ENCODE measurements at regions of chr15 and their contacts with region 1.

Region 1: GRCh38 chr15:58227706-58228543 is 89.7 kb downstream of the AQP9 start:
- DNase-seq: peak; percentile 66 to 89 (median 74)
- ATAC-seq: peak; percentile 89
- H3K4me3 ChIP-seq: no peak overlapping the region
- H3K27ac ChIP-seq: no peak overlapping the region
- H3K4me1 ChIP-seq: peaks cover 0 to 5% of the 10 kb centered on the region in 2 experiments; a peak in 3 of 5 replicates
- H3K27me3 ChIP-seq: no peaks in the 10 kb centered on the region
- CTCF ChIP-seq: peak; percentile 80 to 92 (median 83)
- EP300 ChIP-seq: no peak
- POLR2A ChIP-seq: no peak
- RAD21 ChIP-seq: peak; percentile 96 to 98

Region 2: DNA sequence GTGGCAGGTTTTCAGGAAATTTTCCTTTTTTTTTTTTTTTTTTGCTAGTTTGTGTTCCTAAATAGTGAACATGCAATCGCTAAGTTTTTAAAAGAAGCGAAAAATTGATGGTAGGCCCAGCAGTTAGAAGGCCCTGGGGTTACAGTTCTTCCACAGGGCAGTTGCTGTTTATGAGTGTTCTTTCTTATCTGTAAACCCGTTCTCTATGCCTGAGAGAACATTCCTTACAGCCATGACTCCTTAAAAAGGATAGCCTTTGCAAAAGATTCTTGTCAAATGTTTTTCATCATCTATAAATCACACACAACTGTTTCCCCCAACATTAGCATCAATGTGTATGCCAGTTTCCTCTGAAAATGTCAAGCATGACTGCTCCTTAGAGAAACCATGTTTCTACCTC is 660.0 kb before region 1 on chr15:
- CTCF ChIA-PET with region 1: no interaction called
- POLR2A ChIA-PET with region 1: no interaction called
- in situ Hi-C with region 1: no loop called
- intact Hi-C with region 1: no loop called
- DNase-seq: no peak
- ATAC-seq: no peak
- H3K4me3 ChIP-seq: no peak overlapping the region
- H3K27ac ChIP-seq: no peak overlapping the region
- H3K4me1 ChIP-seq: no peaks in the 10 kb centered on the region; a peak in 2 of 5 replicates
- H3K27me3 ChIP-seq: peaks cover 10 to 22% of the 10 kb centered on the region in 2 experiments
- CTCF ChIP-seq: no peak
- EP300 ChIP-seq: no peak
- POLR2A ChIP-seq: no peak
- RAD21 ChIP-seq: no peak

Region 3: GRCh38 chr15:58433597-58434333 is 205.8 kb after region 1 on chr15:
- CTCF ChIA-PET with region 1: no interaction called
- POLR2A ChIA-PET with region 1: no interaction called
- in situ Hi-C with region 1: no loop called
- intact Hi-C with region 1: loop called (anchors 5 kb)
- DNase-seq: no peak
- ATAC-seq: no peak
- H3K4me3 ChIP-seq: no peak overlapping the region
- H3K27ac ChIP-seq: no peak overlapping the region
- H3K4me1 ChIP-seq: peaks cover 17 to 20% of the 10 kb centered on the region in 2 experiments
- H3K27me3 ChIP-seq: no peaks in the 10 kb centered on the region
- CTCF ChIP-seq: peak in 1 of 3 experiments; percentile 18; a peak in 1 of 6 replicates
- EP300 ChIP-seq: no peak
- POLR2A ChIP-seq: no peak
- RAD21 ChIP-seq: no peak

Region 4: DNA sequence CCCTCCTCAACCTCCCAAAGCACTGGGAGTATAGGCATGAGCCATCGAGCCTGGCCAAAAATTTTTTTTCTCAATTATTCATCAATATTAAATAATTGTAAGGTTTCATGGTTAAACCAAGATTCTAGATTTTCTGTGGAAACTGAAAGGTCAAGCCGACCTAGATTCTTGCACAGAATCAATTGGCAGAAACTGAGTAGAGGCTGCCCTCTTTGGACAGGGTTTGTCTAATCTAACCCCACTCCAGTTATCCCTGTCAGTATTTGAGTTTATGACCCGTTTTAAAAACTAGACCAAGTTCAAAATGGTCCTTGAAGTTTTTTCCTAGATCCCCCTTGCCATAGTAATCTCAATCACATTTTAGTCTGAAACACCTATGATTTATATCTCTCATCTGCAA is 530.2 kb after region 1 on chr15:
- CTCF ChIA-PET with region 1: interaction called, 3 read pairs
- POLR2A ChIA-PET with region 1: no interaction called
- in situ Hi-C with region 1: loop called (anchors 5 kb)
- intact Hi-C with region 1: loop called (anchors 5 kb)
- DNase-seq: peak in 2 of 4 experiments; percentile 28 to 36
- ATAC-seq: peak; percentile 72
- H3K4me3 ChIP-seq: no peak overlapping the region
- H3K27ac ChIP-seq: no peak overlapping the region
- H3K4me1 ChIP-seq: peaks cover 0 to 9% of the 10 kb centered on the region in 2 experiments; a peak in 2 of 5 replicates
- H3K27me3 ChIP-seq: no peaks in the 10 kb centered on the region
- CTCF ChIP-seq: peak; percentile 21 to 57 (median 37); a peak in 3 of 6 replicates
- EP300 ChIP-seq: no peak
- POLR2A ChIP-seq: no peak
- RAD21 ChIP-seq: peak; percentile 59 to 71

Region 5: DNA sequence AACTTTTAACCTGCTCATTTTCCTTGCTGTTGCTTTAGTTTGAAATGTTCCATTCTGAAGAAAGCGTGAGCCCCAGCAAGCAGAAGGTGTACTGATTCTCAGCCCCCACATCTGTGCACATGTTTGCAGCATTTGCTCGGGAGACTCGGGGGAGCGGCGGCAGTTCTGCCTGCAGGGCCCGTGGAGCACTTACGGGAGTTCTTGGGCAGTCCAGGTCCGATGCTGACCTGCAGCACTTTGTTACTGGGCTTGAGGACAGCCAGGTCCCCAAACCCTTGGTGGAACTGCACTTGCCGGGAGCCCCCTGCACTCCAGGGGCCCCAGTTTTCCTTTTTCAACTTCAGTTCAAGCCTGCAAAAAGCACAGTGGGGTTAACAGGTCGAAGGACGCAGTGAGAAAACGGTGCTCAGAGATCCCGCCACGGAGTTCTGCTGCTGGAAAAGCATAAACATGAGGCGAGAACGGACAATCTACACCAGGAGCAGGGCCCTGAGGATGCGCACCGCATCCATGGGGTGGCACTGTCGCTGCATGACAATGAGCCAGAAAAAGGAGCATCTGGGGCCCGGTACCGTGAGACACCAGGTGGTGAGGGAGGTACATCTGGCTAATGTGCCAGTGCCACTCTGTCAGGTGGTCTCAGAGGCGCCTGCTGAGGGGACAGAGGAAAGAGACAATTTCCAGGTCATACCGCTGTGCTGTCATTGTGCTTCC is 933.1 kb after region 1 on chr15:
- CTCF ChIA-PET with region 1: no interaction called
- POLR2A ChIA-PET with region 1: no interaction called
- in situ Hi-C with region 1: loop called (anchors 10 kb)
- intact Hi-C with region 1: no loop called
- DNase-seq: peak; percentile 46 to 63 (median 56)
- ATAC-seq: peak; percentile 97
- H3K4me3 ChIP-seq: no peak overlapping the region
- H3K27ac ChIP-seq: no peak overlapping the region
- H3K4me1 ChIP-seq: peaks cover 0 to 4% of the 10 kb centered on the region in 2 experiments; a peak in 1 of 5 replicates
- H3K27me3 ChIP-seq: peaks cover 10 to 46% of the 10 kb centered on the region in 2 experiments; a peak in 4 of 5 replicates
- CTCF ChIP-seq: peak; percentile 82 to 90 (median 89)
- EP300 ChIP-seq: no peak
- POLR2A ChIP-seq: no peak
- RAD21 ChIP-seq: peak; percentile 68 to 88